Caco-2 (cell line): ENCODE measurements at regions of chr17 and their contacts with region 1.

Region 1: GRCh38 chr17:71378036-71378435 is 742.8 kb upstream of the SOX9 start:
- DNase-seq: no peak
- H3K4me3 ChIP-seq: no peak overlapping the region
- H3K4me3 Mint-ChIP-seq: no peak overlapping the region
- H3K27ac Mint-ChIP-seq: peak overlapping the region; percentile 49
- H3K4me1 ChIP-seq: peaks cover 48% of the 10 kb centered on the region
- H3K4me1 Mint-ChIP-seq: peaks cover 34% of the 10 kb centered on the region
- H3K27me3 ChIP-seq: no peaks in the 10 kb centered on the region
- H3K27me3 Mint-ChIP-seq: no peaks in the 10 kb centered on the region
- CTCF ChIP-seq: no peak

Region 2: DNA sequence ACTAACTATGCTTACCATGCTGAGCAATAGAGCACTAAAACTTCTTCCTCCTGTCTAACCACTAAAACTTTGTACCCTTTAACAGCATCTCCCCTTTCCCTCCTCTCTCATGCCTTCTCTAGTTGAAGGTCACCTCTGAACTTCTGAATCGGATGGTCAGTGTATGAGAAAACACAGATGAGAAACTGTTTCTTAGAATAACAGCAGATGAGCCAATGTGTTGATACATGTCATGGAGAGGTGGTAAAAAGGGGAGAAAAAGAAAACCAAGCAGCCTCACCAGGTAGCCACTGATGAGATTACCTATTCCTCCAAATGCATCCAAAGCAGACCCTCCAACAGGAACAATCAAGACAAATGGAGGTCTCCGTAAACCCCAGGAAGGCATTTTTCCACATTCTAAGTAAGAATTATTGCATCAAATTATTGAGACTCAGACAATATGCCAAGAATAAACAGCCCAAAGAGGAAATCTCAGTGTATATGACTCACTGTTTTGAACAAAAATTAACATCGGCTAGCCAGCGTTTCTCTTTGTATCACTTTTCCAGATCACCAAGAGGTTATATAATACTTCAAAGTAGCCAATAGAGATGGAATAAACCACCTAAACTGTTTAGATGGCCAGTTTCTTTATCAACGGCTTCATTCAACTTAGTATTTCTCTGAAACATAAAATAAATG is 50.5 kb before region 1 on chr17:
- CTCF ChIA-PET with region 1: no interaction called
- POLR2A ChIA-PET with region 1: no interaction called
- intact Hi-C with region 1: loop called (anchors 1 kb)
- DNase-seq: no peak
- H3K4me3 ChIP-seq: no peak overlapping the region
- H3K4me3 Mint-ChIP-seq: no peak overlapping the region
- H3K27ac Mint-ChIP-seq: no peak overlapping the region
- H3K4me1 ChIP-seq: peaks cover 8% of the 10 kb centered on the region
- H3K4me1 Mint-ChIP-seq: peaks cover 10% of the 10 kb centered on the region
- H3K27me3 ChIP-seq: no peaks in the 10 kb centered on the region
- H3K27me3 Mint-ChIP-seq: peaks cover 6% of the 10 kb centered on the region
- CTCF ChIP-seq: no peak

Region 3: DNA sequence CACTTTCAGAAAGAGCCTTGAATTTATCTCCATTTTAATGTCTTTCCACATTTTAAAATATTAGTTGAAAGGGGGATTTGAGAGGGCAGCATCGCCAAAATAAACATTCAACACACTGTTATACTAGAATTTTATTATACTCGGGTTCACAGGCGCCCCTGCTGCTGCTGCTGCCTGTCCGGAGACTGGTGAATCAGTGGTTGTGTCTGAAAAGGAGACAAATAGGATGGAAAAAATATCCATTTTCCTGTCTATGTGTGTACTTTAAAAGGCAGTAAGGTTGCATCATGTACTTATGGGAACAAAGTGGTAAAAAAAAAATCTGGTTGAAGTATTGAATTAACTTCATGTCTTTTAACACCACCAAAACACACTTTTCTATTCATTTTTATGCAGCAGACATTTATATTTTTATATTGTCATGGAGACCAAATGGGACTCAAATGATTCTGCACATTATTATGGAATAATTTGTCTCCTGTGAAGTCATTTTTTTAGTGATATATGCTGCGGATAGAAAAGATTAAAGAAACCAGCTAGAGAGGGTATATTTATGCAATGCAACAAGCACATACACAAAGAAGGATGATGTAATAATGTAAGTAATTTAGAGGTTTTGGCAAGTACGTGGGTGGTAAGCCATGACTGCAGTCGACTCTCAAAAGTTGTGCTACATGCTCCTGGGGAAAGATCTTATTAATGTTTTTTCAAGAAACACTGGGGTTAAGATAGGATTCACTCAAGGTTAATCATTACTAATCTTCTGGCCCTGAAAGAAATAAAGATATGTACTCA is 16.2 kb before region 1 on chr17:
- CTCF ChIA-PET with region 1: no interaction called
- POLR2A ChIA-PET with region 1: no interaction called
- intact Hi-C with region 1: loop called (anchors 2 kb)
- DNase-seq: no peak
- H3K4me3 ChIP-seq: no peak overlapping the region
- H3K4me3 Mint-ChIP-seq: no peak overlapping the region
- H3K27ac Mint-ChIP-seq: no peak overlapping the region
- H3K4me1 ChIP-seq: peaks cover 4% of the 10 kb centered on the region; the same call in 1 of the 2 replicates
- H3K4me1 Mint-ChIP-seq: peaks cover 17% of the 10 kb centered on the region
- H3K27me3 ChIP-seq: no peaks in the 10 kb centered on the region
- H3K27me3 Mint-ChIP-seq: no peaks in the 10 kb centered on the region
- CTCF ChIP-seq: no peak

Region 4: DNA sequence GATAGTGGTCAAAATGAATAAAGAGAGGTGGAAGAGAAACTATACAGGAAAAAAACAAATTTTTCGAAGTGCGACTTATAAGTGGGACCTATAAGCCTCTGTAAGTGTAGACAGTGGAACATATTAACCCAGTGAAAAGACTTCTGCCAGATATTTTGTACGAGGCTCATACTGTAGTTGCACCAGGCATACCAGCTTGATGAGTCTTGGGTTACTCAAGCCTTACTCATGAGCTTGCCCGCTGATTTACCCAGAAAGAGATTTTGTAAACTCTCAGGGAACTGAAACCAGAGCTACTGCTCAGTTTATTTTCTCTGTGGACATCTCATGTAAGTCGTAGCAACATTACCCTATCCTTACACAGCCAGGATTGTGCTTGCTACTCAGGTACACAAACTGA is 34.8 kb after region 1 on chr17:
- CTCF ChIA-PET with region 1: no interaction called
- POLR2A ChIA-PET with region 1: no interaction called
- intact Hi-C with region 1: no loop called
- DNase-seq: no peak
- H3K4me3 ChIP-seq: no peak overlapping the region
- H3K4me3 Mint-ChIP-seq: no peak overlapping the region
- H3K27ac Mint-ChIP-seq: no peak overlapping the region
- H3K4me1 ChIP-seq: no peaks in the 10 kb centered on the region
- H3K4me1 Mint-ChIP-seq: no peaks in the 10 kb centered on the region
- H3K27me3 ChIP-seq: no peaks in the 10 kb centered on the region
- H3K27me3 Mint-ChIP-seq: peaks cover 7% of the 10 kb centered on the region
- CTCF ChIP-seq: no peak

Region 5: GRCh38 chr17:71432378-71433315 is 54.6 kb after region 1 on chr17:
- CTCF ChIA-PET with region 1: no interaction called
- POLR2A ChIA-PET with region 1: no interaction called
- intact Hi-C with region 1: no loop called
- DNase-seq: no peak
- H3K4me3 ChIP-seq: no peak overlapping the region
- H3K4me3 Mint-ChIP-seq: no peak overlapping the region
- H3K27ac Mint-ChIP-seq: no peak overlapping the region
- H3K4me1 ChIP-seq: no peaks in the 10 kb centered on the region
- H3K4me1 Mint-ChIP-seq: no peaks in the 10 kb centered on the region
- H3K27me3 ChIP-seq: no peaks in the 10 kb centered on the region
- H3K27me3 Mint-ChIP-seq: no peaks in the 10 kb centered on the region
- CTCF ChIP-seq: no peak